MCF 10A (cell line): ENCODE measurements at regions of chr3 and their contacts with region 1.

Region 1: GRCh38 chr3:161203485-161204098 is 17.5 kb upstream of the NMD3 start:
- DNase-seq: no peak
- H3K4me3 Mint-ChIP-seq: no peak overlapping the region
- H3K27ac Mint-ChIP-seq: no peak overlapping the region
- H3K4me1 Mint-ChIP-seq: no peaks in the 10 kb centered on the region
- H3K27me3 Mint-ChIP-seq: no peaks in the 10 kb centered on the region
- CTCF ChIP-seq: no peak

Region 2: GRCh38 chr3:160587105-160587504 is 616.5 kb before region 1 on chr3:
- CTCF ChIA-PET with region 1: no interaction called
- POLR2A ChIA-PET with region 1: no interaction called
- intact Hi-C with region 1: no loop called
- DNase-seq: no peak
- H3K4me3 Mint-ChIP-seq: no peak overlapping the region
- H3K27ac Mint-ChIP-seq: no peak overlapping the region
- H3K4me1 Mint-ChIP-seq: peaks cover 7% of the 10 kb centered on the region
- H3K27me3 Mint-ChIP-seq: no peaks in the 10 kb centered on the region
- CTCF ChIP-seq: no peak

Region 3: GRCh38 chr3:160919942-160920341 is 283.6 kb before region 1 on chr3:
- CTCF ChIA-PET with region 1: no interaction called
- POLR2A ChIA-PET with region 1: no interaction called
- intact Hi-C with region 1: no loop called
- DNase-seq: no peak
- H3K4me3 Mint-ChIP-seq: no peak overlapping the region
- H3K27ac Mint-ChIP-seq: no peak overlapping the region
- H3K4me1 Mint-ChIP-seq: no peaks in the 10 kb centered on the region
- H3K27me3 Mint-ChIP-seq: no peaks in the 10 kb centered on the region
- CTCF ChIP-seq: no peak

Region 4: GRCh38 chr3:161096771-161097355 is 106.7 kb before region 1 on chr3:
- CTCF ChIA-PET with region 1: interaction called, 3 read pairs
- POLR2A ChIA-PET with region 1: no interaction called
- intact Hi-C with region 1: loop called (anchors 5 kb)
- DNase-seq: peak; percentile 42
- H3K4me3 Mint-ChIP-seq: no peak overlapping the region
- H3K27ac Mint-ChIP-seq: no peak overlapping the region
- H3K4me1 Mint-ChIP-seq: no peaks in the 10 kb centered on the region
- H3K27me3 Mint-ChIP-seq: no peaks in the 10 kb centered on the region
- CTCF ChIP-seq: peak; percentile 41